B cell (primary cell): ENCODE measurements at regions of chr7 and their contacts with region 1.

Region 1: DNA sequence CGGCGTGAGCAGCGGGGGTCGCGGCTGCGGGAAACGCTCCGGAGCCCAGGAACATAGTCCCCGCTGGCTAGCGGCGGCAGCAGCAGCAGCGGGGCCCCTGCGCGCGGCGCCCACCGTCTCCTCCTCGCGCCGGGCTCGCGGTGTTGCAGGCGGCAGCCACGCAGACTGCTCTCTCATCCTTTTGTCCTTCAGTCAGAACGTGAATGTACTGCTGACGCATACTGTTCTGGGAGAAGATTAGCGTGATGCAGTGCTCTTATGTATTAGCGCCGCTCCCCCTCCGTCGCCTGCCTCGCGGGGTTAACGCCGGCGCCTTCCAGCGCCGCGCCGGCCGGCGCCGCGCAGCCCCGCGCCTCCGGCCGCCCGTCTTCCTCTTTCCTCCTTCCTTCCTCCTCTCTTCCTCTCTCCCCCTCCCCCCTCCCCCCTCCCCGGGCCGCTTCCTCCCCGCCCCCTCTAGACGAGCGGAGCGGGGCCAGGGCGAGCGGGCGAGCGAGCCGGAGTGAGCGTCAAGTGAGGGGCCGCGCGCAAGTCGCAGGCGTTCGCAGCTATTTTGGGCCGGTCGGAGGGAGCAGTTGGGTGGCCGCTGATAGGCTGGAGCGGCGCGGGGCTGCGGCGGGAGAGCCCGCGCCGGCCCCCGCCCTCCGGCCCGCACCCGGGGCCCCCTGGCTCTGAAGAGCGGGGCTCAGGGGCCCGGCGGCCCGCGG is 816 bp upstream of the LRRC4 start:
- DNase-seq: peak; percentile 74
- ATAC-seq: peak; percentile 83
- H3K4me3 ChIP-seq: peak overlapping the region; percentile 15 to 57 (median 51)
- H3K4me3 Mint-ChIP-seq: peak overlapping the region; percentile 96
- H3K27ac ChIP-seq: no peak overlapping the region
- H3K27ac Mint-ChIP-seq: peak overlapping the region; percentile 78
- H3K4me1 ChIP-seq: peaks cover 13 to 26% of the 10 kb centered on the region in 2 donors
- H3K4me1 Mint-ChIP-seq: peaks cover 28% of the 10 kb centered on the region
- H3K27me3 ChIP-seq: peaks cover 0 to 18% (median 0%) of the 10 kb centered on the region in 4 experiments
- H3K27me3 Mint-ChIP-seq: peaks cover 8% of the 10 kb centered on the region
- CTCF ChIP-seq: no peak

Region 2: GRCh38 chr7:127911968-127912511 is 120.0 kb before region 1 on chr7:
- CTCF ChIA-PET with region 1: no interaction called
- POLR2A ChIA-PET with region 1: no interaction called
- intact Hi-C with region 1: loop called (anchors 10 kb)
- DNase-seq: peak; percentile 48
- ATAC-seq: peak; percentile 47
- H3K4me3 ChIP-seq: peak overlapping the region in 1 of 5 experiments; percentile 24
- H3K4me3 Mint-ChIP-seq: peak overlapping the region; percentile 54
- H3K27ac ChIP-seq: peak overlapping the region; percentile 12 to 58
- H3K27ac Mint-ChIP-seq: peak overlapping the region; percentile 69
- H3K4me1 ChIP-seq: peaks cover 26 to 30% of the 10 kb centered on the region in 2 donors
- H3K4me1 Mint-ChIP-seq: peaks cover 35% of the 10 kb centered on the region
- H3K27me3 ChIP-seq: no peaks in the 10 kb centered on the region
- H3K27me3 Mint-ChIP-seq: no peaks in the 10 kb centered on the region
- CTCF ChIP-seq: no peak

Region 3: DNA sequence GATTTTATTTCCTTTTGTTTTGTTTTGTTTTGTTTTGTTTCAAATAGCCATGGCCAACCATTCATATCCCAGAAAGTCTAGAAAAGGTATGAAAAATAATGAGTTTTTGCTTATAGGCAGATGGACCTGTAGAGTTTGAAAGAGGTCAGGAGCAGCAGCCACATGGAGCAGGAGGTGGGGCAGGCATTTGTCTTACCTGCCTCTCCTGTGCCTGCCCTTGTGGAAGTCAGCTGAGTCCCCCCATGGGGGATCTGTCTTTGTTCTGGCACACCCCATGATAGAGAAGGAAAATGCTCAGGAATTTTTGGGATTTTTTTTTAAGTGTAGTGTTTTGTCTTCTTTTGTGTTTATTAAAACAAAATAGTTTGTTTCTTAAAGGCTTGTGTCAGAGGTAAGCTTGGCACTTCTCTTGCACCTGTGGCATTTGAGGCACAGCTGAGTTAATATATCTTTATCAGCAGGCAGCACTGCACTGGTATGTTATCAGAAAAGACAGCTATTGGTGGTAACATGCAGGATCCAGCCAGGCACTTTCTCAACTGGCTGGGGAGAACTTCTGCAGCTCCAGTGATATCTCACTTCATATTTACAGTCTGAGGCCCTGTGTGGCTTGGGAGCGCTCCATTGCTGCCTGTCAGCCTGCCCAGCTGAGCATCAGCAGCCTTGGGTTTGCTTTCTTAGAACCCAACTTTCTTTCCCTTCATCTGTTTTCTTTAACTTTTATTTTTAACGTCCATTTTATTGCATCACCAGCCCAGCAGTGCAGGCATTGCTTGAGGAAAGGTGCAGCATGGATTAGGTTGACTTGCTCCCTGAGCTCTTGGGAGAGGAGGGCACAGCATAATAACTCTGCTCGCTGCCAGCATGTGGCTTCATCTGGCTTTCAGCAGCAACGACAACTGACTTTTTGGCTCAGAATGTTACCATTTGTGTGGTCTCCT is 45.2 kb before region 1 on chr7:
- CTCF ChIA-PET with region 1: no interaction called
- POLR2A ChIA-PET with region 1: no interaction called
- intact Hi-C with region 1: no loop called
- DNase-seq: no peak
- ATAC-seq: no peak
- H3K4me3 ChIP-seq: no peak overlapping the region
- H3K4me3 Mint-ChIP-seq: no peak overlapping the region
- H3K27ac ChIP-seq: no peak overlapping the region
- H3K27ac Mint-ChIP-seq: no peak overlapping the region
- H3K4me1 ChIP-seq: no peaks in the 10 kb centered on the region
- H3K4me1 Mint-ChIP-seq: no peaks in the 10 kb centered on the region
- H3K27me3 ChIP-seq: no peaks in the 10 kb centered on the region
- H3K27me3 Mint-ChIP-seq: no peaks in the 10 kb centered on the region
- CTCF ChIP-seq: no peak